CD8-positive, alpha-beta T cell (primary cell): ENCODE measurements at regions of chr10 and their contacts with region 1.

Region 1: GRCh38 chr10:101441541-101442455 is 87.8 kb downstream of the BTRC start:
- DNase-seq: peak in 2 of 9 experiments; percentile 43 to 61
- ATAC-seq: peak; percentile 89
- H3K4me3 ChIP-seq: no peak overlapping the region
- H3K4me3 Mint-ChIP-seq: no peak overlapping the region
- H3K27ac ChIP-seq: no peak overlapping the region
- H3K27ac Mint-ChIP-seq: no peak overlapping the region
- H3K4me1 ChIP-seq: no peaks in the 10 kb centered on the region
- H3K4me1 Mint-ChIP-seq: peaks cover 6% of the 10 kb centered on the region
- H3K27me3 ChIP-seq: no peaks in the 10 kb centered on the region
- H3K27me3 Mint-ChIP-seq: no peaks in the 10 kb centered on the region
- CTCF ChIP-seq: peak; percentile 55

Region 2: GRCh38 chr10:101272229-101272868 is 169.4 kb before region 1 on chr10:
- CTCF ChIA-PET with region 1: interaction called, 4 read pairs
- POLR2A ChIA-PET with region 1: no interaction called
- intact Hi-C with region 1: loop called in 1 of 2 experiments (anchors 1 kb)
- DNase-seq: peak; percentile 34 to 70 (median 55)
- ATAC-seq: peak; percentile 80
- H3K4me3 ChIP-seq: no peak overlapping the region
- H3K4me3 Mint-ChIP-seq: no peak overlapping the region
- H3K27ac ChIP-seq: no peak overlapping the region
- H3K27ac Mint-ChIP-seq: no peak overlapping the region
- H3K4me1 ChIP-seq: no peaks in the 10 kb centered on the region
- H3K4me1 Mint-ChIP-seq: no peaks in the 10 kb centered on the region
- H3K27me3 ChIP-seq: peaks cover 0 to 2% of the 10 kb centered on the region in 2 experiments
- H3K27me3 Mint-ChIP-seq: peaks cover 34% of the 10 kb centered on the region
- CTCF ChIP-seq: peak; percentile 65

Region 3: DNA sequence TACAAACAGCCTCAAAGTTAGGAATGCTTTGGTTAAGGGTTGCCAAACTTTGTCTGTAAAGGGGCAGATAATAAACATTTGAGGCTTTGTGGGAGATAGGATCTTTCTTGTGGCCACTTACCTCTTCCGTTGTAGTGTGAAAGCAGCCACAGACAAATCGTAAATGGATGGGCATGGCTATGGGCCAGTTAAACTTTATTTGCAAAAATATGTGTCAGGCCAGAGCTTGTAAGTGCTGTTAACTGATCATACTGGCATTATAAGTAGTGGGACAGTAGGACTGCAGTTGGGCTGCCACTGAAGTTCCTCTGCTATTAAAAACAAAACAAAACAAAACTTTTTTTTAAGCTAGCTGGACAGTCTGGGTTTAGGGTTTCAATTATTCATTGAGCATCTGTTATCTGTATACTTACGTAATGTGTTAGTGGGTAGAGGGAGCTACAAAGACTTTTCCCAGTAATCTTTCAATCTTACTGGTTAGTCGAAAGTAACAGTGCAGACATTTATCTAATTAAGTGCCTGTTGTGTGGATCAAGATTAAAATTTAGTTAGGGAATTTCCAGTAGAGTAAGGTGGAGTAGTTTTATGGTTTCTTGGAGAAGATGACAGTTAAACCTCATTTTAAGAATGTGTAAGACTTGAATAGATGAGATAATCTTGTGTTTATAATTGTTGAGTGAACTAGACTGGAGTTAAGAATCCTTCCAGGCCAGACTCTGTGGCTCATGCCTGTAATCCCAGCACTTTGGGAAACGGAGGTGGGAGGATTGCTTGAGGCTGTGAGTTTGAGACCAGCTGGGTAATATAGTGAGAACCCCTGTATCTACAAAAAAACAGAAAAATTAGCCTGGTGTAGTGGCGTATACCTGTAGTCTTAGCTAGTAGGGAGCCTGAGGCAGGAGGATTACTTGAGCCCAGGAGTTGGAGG is 12.3 kb after region 1 on chr10:
- CTCF ChIA-PET with region 1: interaction called, 10 read pairs
- POLR2A ChIA-PET with region 1: no interaction called
- intact Hi-C with region 1: no loop called
- DNase-seq: peak in 2 of 9 experiments; percentile 24 to 32
- ATAC-seq: no peak
- H3K4me3 ChIP-seq: no peak overlapping the region
- H3K4me3 Mint-ChIP-seq: no peak overlapping the region
- H3K27ac ChIP-seq: no peak overlapping the region
- H3K27ac Mint-ChIP-seq: no peak overlapping the region
- H3K4me1 ChIP-seq: peaks cover 18% of the 10 kb centered on the region
- H3K4me1 Mint-ChIP-seq: peaks cover 35% of the 10 kb centered on the region
- H3K27me3 ChIP-seq: no peaks in the 10 kb centered on the region
- H3K27me3 Mint-ChIP-seq: no peaks in the 10 kb centered on the region
- CTCF ChIP-seq: no peak

Region 4: DNA sequence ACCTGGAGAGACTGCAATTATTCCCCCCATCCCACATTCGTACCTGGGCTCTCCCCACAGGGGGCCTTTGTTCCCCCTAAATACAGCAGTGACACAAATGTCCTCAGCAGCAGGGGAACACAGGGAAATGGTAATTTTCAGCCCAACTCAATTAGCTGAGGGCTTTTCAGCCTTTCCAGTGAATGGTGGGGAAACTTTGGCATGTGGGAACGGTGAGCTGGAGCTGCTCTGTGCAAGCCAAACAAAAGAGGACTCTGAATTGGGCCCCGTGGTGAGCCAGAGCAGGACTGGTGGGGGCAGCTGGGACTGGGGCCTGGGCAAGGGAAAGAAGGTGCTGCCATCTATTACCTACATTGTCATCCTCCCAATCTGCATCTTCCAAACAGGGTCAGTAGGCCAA is 202.2 kb after region 1 on chr10:
- CTCF ChIA-PET with region 1: no interaction called
- POLR2A ChIA-PET with region 1: no interaction called
- intact Hi-C with region 1: no loop called
- DNase-seq: no peak
- ATAC-seq: no peak
- H3K4me3 ChIP-seq: no peak overlapping the region
- H3K4me3 Mint-ChIP-seq: no peak overlapping the region
- H3K27ac ChIP-seq: no peak overlapping the region
- H3K27ac Mint-ChIP-seq: peak overlapping the region; percentile 37
- H3K4me1 ChIP-seq: no peaks in the 10 kb centered on the region
- H3K4me1 Mint-ChIP-seq: peaks cover 24% of the 10 kb centered on the region
- H3K27me3 ChIP-seq: no peaks in the 10 kb centered on the region
- H3K27me3 Mint-ChIP-seq: no peaks in the 10 kb centered on the region
- CTCF ChIP-seq: no peak

Region 5: GRCh38 chr10:102523250-102524029 is 1081.6 kb after region 1 on chr10:
- CTCF ChIA-PET with region 1: no interaction called
- POLR2A ChIA-PET with region 1: no interaction called
- intact Hi-C with region 1: no loop called
- DNase-seq: no peak
- ATAC-seq: no peak
- H3K4me3 ChIP-seq: no peak overlapping the region
- H3K4me3 Mint-ChIP-seq: no peak overlapping the region
- H3K27ac ChIP-seq: no peak overlapping the region
- H3K27ac Mint-ChIP-seq: no peak overlapping the region
- H3K4me1 ChIP-seq: no peaks in the 10 kb centered on the region
- H3K4me1 Mint-ChIP-seq: peaks cover 17% of the 10 kb centered on the region
- H3K27me3 ChIP-seq: no peaks in the 10 kb centered on the region
- H3K27me3 Mint-ChIP-seq: no peaks in the 10 kb centered on the region
- CTCF ChIP-seq: no peak